PC-3 (cell line): ENCODE measurements at regions of chr11 and their contacts with region 1.

Region 1: GRCh38 chr11:74726547-74727182 is 4.6 kb downstream of the CHRDL2 start:
- DNase-seq: peak; percentile 87
- ATAC-seq: peak; percentile 99
- H3K4me3 ChIP-seq: no peak overlapping the region
- H3K27ac ChIP-seq: no peak overlapping the region
- H3K4me1 ChIP-seq: no peaks in the 10 kb centered on the region
- H3K27me3 ChIP-seq: peaks cover 34% of the 10 kb centered on the region
- CTCF ChIP-seq: peak; percentile 96

Region 2: DNA sequence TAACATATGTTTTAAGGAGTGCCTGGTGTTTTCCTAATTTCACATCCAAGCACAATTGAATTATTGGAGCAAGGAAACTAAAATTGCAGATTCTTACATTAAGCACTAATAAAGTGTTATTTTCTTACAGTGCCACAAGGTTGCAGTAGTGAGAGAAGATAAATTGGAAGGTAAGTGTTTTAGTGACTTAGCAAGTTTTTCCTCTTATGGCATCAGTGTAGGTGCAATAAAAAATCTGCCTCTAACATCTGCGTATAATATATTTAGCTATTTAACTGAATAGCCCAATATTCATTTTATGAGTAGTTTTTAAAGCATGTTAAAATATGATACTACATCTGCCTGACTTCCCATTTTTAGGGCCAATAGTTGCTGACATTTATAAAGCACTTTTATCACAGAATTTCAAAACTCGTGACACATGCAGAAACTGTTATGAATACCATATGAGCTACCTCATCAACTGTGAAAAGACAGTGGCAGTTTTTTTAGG is 115.2 kb before region 1 on chr11:
- CTCF ChIA-PET with region 1: interaction called, 4 read pairs
- POLR2A ChIA-PET with region 1: interaction called, 3 read pairs
- intact Hi-C with region 1: loop called (anchors 5 kb)
- DNase-seq: peak; percentile 68
- ATAC-seq: peak; percentile 56; the same call in 1 of the 2 replicates
- H3K4me3 ChIP-seq: no peak overlapping the region
- H3K27ac ChIP-seq: no peak overlapping the region
- H3K4me1 ChIP-seq: no peaks in the 10 kb centered on the region
- H3K27me3 ChIP-seq: no peaks in the 10 kb centered on the region
- CTCF ChIP-seq: peak; percentile 76

Region 3: GRCh38 chr11:74634537-74634936 is 92.1 kb before region 1 on chr11:
- CTCF ChIA-PET with region 1: interaction called, 7 read pairs
- POLR2A ChIA-PET with region 1: no interaction called
- intact Hi-C with region 1: loop called (anchors 1 kb)
- DNase-seq: peak; percentile 81
- ATAC-seq: peak; percentile 84
- H3K4me3 ChIP-seq: no peak overlapping the region
- H3K27ac ChIP-seq: no peak overlapping the region
- H3K4me1 ChIP-seq: peaks cover 20% of the 10 kb centered on the region
- H3K27me3 ChIP-seq: no peaks in the 10 kb centered on the region
- CTCF ChIP-seq: peak; percentile 87

Region 4: DNA sequence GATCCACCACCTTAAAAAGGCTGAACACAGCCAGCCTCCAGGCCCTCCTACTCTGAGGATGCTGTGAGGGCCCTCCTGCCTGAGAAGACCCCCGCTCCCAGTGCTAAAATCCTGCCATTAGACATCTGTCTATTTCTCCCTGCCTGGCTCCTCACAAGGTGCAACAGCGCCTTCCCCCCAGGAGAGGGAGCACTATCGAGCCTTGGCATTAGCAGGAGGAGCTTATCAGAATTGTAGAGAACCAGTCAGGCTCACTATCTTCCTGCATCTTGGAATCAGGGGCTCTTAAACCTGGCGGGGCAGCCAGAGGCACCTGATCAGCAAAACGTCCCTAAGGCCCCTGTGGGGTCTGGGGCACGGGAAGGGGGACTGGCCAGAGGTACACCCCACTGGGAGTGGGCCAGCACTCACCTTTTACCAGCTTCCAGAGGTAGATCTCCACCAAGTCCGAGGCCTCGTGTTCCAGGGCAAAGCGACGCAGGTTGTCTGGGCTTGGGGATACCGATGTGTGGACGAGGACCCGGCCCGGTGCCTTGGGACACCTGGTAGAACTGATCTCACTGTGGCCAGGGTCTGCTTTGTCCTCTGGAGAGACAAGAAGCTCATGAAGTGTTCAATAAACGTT is 24.2 kb before region 1 on chr11:
- CTCF ChIA-PET with region 1: interaction called, 28 read pairs
- POLR2A ChIA-PET with region 1: no interaction called
- intact Hi-C with region 1: loop called (anchors 1 kb)
- DNase-seq: peak; percentile 84
- ATAC-seq: peak; percentile 85
- H3K4me3 ChIP-seq: no peak overlapping the region
- H3K27ac ChIP-seq: no peak overlapping the region
- H3K4me1 ChIP-seq: no peaks in the 10 kb centered on the region
- H3K27me3 ChIP-seq: no peaks in the 10 kb centered on the region
- CTCF ChIP-seq: peak; percentile 97